ENCODE measurements at regions of chr1 and their contacts with region 1.

Region 1: DNA sequence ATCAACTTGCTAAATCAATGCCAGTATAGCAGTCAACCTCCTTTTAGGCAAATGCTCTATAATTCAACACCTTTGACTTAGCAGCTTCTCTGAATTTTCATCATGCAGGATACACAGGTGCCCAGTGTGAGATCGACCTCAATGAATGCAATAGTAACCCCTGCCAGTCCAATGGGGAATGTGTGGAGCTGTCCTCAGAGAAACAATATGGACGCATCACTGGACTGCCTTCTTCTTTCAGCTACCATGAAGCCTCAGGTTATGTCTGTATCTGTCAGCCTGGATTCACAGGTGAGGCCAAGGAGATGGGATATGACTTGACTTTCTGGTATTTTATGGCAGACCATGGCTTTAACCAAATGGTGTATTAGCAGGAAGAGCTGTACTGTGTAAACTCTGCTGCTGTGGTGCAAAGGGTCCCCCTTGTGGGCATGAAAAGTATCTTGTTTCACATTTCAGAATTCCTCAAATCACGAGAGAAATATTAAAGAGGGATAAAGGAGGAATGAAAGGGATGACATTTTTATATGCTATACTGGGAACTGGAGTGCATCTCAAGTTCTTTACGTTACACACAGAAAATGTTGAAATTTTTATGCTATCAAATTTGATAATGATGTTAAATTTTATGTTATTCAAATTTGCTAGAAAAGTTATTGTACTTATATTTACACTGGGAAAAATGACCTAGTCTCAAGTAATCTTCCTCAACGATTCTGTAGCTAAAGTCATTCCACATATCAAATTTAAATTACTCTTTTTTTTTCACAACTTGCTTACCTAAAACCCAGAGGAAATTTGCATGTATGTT is 88.9 kb downstream of the CRB1 start:
- DNase-seq: peak; percentile 21 to 75 (median 25)
- ATAC-seq: peak; percentile 89
- H3K4me3 ChIP-seq: no peak overlapping the region
- H3K27ac ChIP-seq: no peak overlapping the region
- H3K4me1 ChIP-seq: peaks cover 0 to 7% of the 10 kb centered on the region in 2 experiments; a peak in 1 of 5 replicates
- H3K27me3 ChIP-seq: no peaks in the 10 kb centered on the region
- CTCF ChIP-seq: peak; percentile 74 to 89 (median 80)
- EP300 ChIP-seq: no peak
- POLR2A ChIP-seq: no peak
- RAD21 ChIP-seq: peak; percentile 89 to 97

Region 2: DNA sequence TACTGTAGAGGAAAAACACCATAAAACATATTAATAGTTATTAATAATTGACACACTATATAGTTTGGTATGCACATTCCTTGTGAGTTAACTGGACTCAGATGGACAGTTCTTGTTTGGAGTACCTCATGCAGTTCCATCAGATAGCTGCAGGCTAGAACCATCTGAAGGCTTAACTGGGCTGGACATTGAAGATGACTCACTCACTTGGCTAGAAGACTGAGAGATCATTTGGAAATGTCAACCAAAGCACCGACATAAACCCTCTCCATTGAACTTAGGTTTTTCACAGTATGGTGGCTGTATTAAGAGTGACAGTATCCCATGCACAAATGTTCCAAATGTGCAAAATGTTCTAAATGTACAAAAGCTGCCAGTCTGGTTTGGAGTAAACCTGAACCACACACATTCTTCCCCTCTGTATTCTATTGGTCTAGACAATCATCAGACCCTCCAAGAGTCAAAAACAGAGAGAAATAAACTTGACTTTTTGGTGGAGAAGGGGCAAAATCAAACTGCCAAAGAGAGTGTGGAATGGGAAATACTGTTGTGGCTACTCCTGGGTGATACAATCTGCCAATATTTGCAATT is 1457.1 kb before region 1 on chr1:
- CTCF ChIA-PET with region 1: no interaction called
- POLR2A ChIA-PET with region 1: no interaction called
- in situ Hi-C with region 1: no loop called
- intact Hi-C with region 1: loop called (anchors 5 kb)
- DNase-seq: peak; percentile 49 to 90 (median 62)
- ATAC-seq: peak; percentile 90
- H3K4me3 ChIP-seq: no peak overlapping the region
- H3K27ac ChIP-seq: peak overlapping the region; percentile 65
- H3K4me1 ChIP-seq: peaks cover 0 to 30% of the 10 kb centered on the region in 2 experiments; a peak in 2 of 5 replicates
- H3K27me3 ChIP-seq: no peaks in the 10 kb centered on the region
- CTCF ChIP-seq: no peak
- EP300 ChIP-seq: peak; percentile 80
- POLR2A ChIP-seq: no peak
- RAD21 ChIP-seq: no peak; a peak in 1 of 4 replicates

Region 3: GRCh38 chr1:196317535-196318522 is 1039.1 kb before region 1 on chr1:
- CTCF ChIA-PET with region 1: no interaction called
- POLR2A ChIA-PET with region 1: no interaction called
- in situ Hi-C with region 1: no loop called
- intact Hi-C with region 1: loop called (anchors 10 kb)
- DNase-seq: peak in 3 of 4 experiments; percentile 10 to 47 (median 13)
- ATAC-seq: peak; percentile 64; the same call in 2 of the 3 replicates
- H3K4me3 ChIP-seq: no peak overlapping the region
- H3K27ac ChIP-seq: no peak overlapping the region
- H3K4me1 ChIP-seq: no peaks in the 10 kb centered on the region
- H3K27me3 ChIP-seq: no peaks in the 10 kb centered on the region
- CTCF ChIP-seq: peak; percentile 41 to 54 (median 46); a peak in 4 of 6 replicates
- EP300 ChIP-seq: no peak
- POLR2A ChIP-seq: no peak
- RAD21 ChIP-seq: peak; percentile 70 to 78

Region 4: GRCh38 chr1:196723322-196724185 is 633.4 kb before region 1 on chr1:
- CTCF ChIA-PET with region 1: no interaction called
- POLR2A ChIA-PET with region 1: no interaction called
- in situ Hi-C with region 1: loop called (anchors 25 kb)
- intact Hi-C with region 1: loop called (anchors 1 kb)
- DNase-seq: peak; percentile 29 to 77 (median 38)
- ATAC-seq: peak; percentile 97
- H3K4me3 ChIP-seq: no peak overlapping the region
- H3K27ac ChIP-seq: no peak overlapping the region
- H3K4me1 ChIP-seq: no peaks in the 10 kb centered on the region
- H3K27me3 ChIP-seq: no peaks in the 10 kb centered on the region
- CTCF ChIP-seq: peak; percentile 66 to 85 (median 82)
- EP300 ChIP-seq: no peak
- POLR2A ChIP-seq: no peak
- RAD21 ChIP-seq: peak in 1 of 2 experiments; percentile 79; a peak in 3 of 4 replicates

Region 5: GRCh38 chr1:196732526-196732925 is 624.4 kb before region 1 on chr1:
- CTCF ChIA-PET with region 1: no interaction called
- POLR2A ChIA-PET with region 1: no interaction called
- in situ Hi-C with region 1: loop called (anchors 25 kb)
- intact Hi-C with region 1: no loop called
- DNase-seq: peak in 2 of 4 experiments; percentile 17 to 18
- ATAC-seq: no peak
- H3K4me3 ChIP-seq: no peak overlapping the region
- H3K27ac ChIP-seq: no peak overlapping the region
- H3K4me1 ChIP-seq: no peaks in the 10 kb centered on the region
- H3K27me3 ChIP-seq: no peaks in the 10 kb centered on the region
- CTCF ChIP-seq: no peak
- EP300 ChIP-seq: no peak
- POLR2A ChIP-seq: no peak
- RAD21 ChIP-seq: no peak

Region 6: GRCh38 chr1:197180252-197180878 is 176.6 kb before region 1 on chr1:
- CTCF ChIA-PET with region 1: interaction called, 23 read pairs
- POLR2A ChIA-PET with region 1: no interaction called
- in situ Hi-C with region 1: loop called (anchors 10 kb)
- intact Hi-C with region 1: loop called (anchors 1 kb)
- DNase-seq: peak; percentile 27 to 56 (median 42)
- ATAC-seq: peak; percentile 88
- H3K4me3 ChIP-seq: no peak overlapping the region
- H3K27ac ChIP-seq: no peak overlapping the region
- H3K4me1 ChIP-seq: peaks cover 3 to 4% of the 10 kb centered on the region in 2 experiments; a peak in 2 of 5 replicates
- H3K27me3 ChIP-seq: no peaks in the 10 kb centered on the region
- CTCF ChIP-seq: peak; percentile 48 to 82 (median 63); a peak in 5 of 6 replicates
- EP300 ChIP-seq: no peak
- POLR2A ChIP-seq: no peak
- RAD21 ChIP-seq: peak; percentile 88 to 90

Region 7: GRCh38 chr1:197249324-197249723 is 107.6 kb before region 1 on chr1:
- CTCF ChIA-PET with region 1: no interaction called
- POLR2A ChIA-PET with region 1: no interaction called
- in situ Hi-C with region 1: no loop called
- intact Hi-C with region 1: no loop called
- DNase-seq: no peak
- ATAC-seq: no peak
- H3K4me3 ChIP-seq: no peak overlapping the region
- H3K27ac ChIP-seq: no peak overlapping the region
- H3K4me1 ChIP-seq: no peaks in the 10 kb centered on the region
- H3K27me3 ChIP-seq: no peaks in the 10 kb centered on the region
- CTCF ChIP-seq: no peak
- EP300 ChIP-seq: no peak
- POLR2A ChIP-seq: no peak
- RAD21 ChIP-seq: no peak

Region 8: DNA sequence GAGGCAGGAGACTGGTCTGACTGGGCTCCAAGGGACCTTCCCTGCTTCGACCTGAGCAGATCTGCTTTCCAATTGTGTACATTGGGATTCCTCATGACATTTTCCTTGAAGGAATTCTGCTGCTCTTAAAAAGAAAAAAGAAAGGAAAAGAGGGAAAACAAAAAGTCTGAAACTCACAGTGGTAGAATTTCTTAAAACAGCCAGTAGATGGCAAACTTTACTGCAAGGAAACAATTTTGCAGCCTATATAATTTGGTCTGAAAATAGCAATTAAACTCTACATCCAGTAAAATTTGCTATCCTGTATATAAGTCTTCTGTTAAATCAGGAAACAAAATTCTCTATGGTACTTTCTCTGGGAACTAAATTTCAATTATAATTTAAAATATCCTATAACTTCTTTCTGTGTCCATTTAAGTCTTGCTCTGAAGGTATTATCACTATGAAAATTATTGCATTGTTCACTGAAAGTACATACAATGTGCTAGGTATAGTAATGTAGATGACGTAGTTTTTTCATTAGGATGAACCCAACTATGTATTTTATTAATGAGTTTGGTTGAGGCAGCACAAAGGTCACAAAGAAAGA is 29.1 kb before region 1 on chr1:
- CTCF ChIA-PET with region 1: interaction called, 9 read pairs
- POLR2A ChIA-PET with region 1: no interaction called
- in situ Hi-C with region 1: no loop called
- intact Hi-C with region 1: loop called (anchors 1 kb)
- DNase-seq: no peak
- ATAC-seq: peak; percentile 75; the same call in 2 of the 3 replicates
- H3K4me3 ChIP-seq: no peak overlapping the region
- H3K27ac ChIP-seq: no peak overlapping the region
- H3K4me1 ChIP-seq: no peaks in the 10 kb centered on the region
- H3K27me3 ChIP-seq: no peaks in the 10 kb centered on the region
- CTCF ChIP-seq: peak; percentile 32 to 65 (median 56); a peak in 5 of 6 replicates
- EP300 ChIP-seq: no peak
- POLR2A ChIP-seq: no peak
- RAD21 ChIP-seq: peak; percentile 63 to 74

Region 9: GRCh38 chr1:197541411-197541810 is 184.5 kb after region 1 on chr1:
- CTCF ChIA-PET with region 1: no interaction called
- POLR2A ChIA-PET with region 1: no interaction called
- in situ Hi-C with region 1: no loop called
- intact Hi-C with region 1: no loop called
- DNase-seq: no peak
- ATAC-seq: no peak
- H3K4me3 ChIP-seq: no peak overlapping the region
- H3K27ac ChIP-seq: no peak overlapping the region
- H3K4me1 ChIP-seq: no peaks in the 10 kb centered on the region
- H3K27me3 ChIP-seq: no peaks in the 10 kb centered on the region
- CTCF ChIP-seq: no peak
- EP300 ChIP-seq: no peak
- POLR2A ChIP-seq: no peak
- RAD21 ChIP-seq: no peak

Measured in K562 (cell line).